ENCODE measurements at regions of chr1 and their contacts with region 1.

Region 1: GRCh38 chr1:11805447-11806306 is at the starts of genes CLCN6 and MTHFR:
- H3K4me3 Mint-ChIP-seq: peak within 1 kb of the TSS; percentile 94
- H3K27ac Mint-ChIP-seq: peak within 1 kb of the TSS; percentile 94
- H3K4me1 Mint-ChIP-seq: peaks cover 76% of the 10 kb centered on the region
- H3K27me3 Mint-ChIP-seq: no peaks in the 10 kb centered on the region

Region 2: GRCh38 chr1:11707621-11708276 is 97.9 kb before region 1 on chr1:
- intact Hi-C with region 1: no loop called
- H3K4me3 Mint-ChIP-seq: no peak overlapping the region
- H3K27ac Mint-ChIP-seq: no peak overlapping the region
- H3K4me1 Mint-ChIP-seq: peaks cover 25% of the 10 kb centered on the region
- H3K27me3 Mint-ChIP-seq: peaks cover 36% of the 10 kb centered on the region

Region 3: GRCh38 chr1:11735854-11736745 is 69.6 kb before region 1 on chr1 and contains the start of gene AGTRAP:
- intact Hi-C with region 1: loop called (anchors 5 kb)
- H3K4me3 Mint-ChIP-seq: peak within 1 kb of the TSS; percentile 100
- H3K27ac Mint-ChIP-seq: peak within 1 kb of the TSS; percentile 94
- H3K4me1 Mint-ChIP-seq: peaks cover 73% of the 10 kb centered on the region
- H3K27me3 Mint-ChIP-seq: no peaks in the 10 kb centered on the region

Region 4: DNA sequence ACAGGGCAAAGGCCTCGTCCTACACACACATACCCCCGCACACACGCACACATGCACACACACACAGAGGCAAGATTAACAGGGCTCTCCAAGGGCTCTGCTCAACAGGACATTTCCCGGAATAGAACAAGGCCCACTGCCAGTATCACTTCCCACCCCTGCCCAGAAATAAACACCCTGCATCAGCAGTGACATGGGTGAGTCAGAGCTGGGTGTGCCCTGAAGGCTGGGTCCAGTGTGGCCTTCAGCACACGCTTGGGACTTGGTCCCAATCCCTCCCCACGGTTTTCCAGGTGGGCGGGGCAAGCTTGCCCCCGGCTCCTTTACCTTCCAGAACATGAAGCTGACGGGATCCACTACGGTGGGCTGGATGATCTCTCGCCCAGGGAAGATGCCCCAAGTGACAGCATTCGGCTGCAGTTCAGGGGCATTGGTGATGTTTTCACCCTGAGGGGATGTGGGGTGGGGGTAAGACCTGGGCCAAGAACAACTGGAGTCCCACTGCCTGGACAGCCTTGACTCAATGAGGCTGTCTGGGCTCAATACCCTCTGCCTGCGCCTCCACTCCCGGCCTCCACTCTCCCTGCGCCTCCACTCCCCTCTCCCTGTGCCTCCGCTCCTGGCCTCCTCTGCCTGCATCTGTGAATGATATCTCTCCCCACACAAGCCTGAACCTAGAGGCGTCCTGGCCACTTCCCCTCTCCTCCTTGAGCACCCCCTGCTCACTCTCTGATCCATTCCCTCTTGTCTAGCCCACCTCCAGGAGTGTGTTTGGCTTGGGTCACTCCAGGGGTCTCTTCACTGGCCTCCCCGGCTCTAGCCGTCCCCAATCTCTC is 14.6 kb before region 1 on chr1:
- intact Hi-C with region 1: loop called (anchors 1 kb)
- H3K4me3 Mint-ChIP-seq: no peak overlapping the region
- H3K27ac Mint-ChIP-seq: peak overlapping the region; percentile 90
- H3K4me1 Mint-ChIP-seq: peaks cover 66% of the 10 kb centered on the region
- H3K27me3 Mint-ChIP-seq: peaks cover 1% of the 10 kb centered on the region